Mammary epithelial cell (primary cell): ENCODE measurements at regions of chr3 and their contacts with region 1.

Region 1: DNA sequence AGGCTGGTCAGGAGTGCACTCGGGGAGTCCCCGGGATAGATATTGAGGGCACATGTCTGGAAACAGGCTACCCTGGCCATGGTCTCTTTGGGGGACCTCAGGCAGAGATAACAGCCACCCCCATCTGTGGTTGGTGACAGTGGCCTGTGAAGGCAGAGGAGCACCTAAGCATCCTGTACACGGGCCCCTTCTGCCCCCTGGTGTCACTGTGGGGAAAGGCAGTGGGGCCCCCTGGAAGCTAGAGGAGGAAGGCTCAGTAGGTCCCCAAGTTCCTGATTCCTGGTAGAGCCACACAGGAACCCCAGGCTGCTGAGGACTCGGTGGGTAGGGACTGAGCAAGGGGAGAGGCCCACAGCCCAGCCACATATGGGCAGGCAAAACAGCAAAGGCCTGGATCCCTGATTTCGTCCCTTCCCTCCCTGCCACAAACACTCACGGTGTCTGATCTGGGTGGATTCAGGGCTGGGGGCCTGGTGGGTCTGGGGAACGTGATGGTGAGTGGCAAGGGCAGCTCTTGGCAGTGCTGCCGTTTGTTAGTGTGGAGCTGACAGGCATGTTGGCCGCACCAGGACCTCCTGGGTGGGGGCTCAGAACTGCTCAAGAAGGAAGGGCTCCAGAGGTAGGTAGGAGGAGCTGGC is 14.1 kb upstream of the CXCR6 start:
- DNase-seq: no peak
- H3K4me3 ChIP-seq: no peak overlapping the region
- H3K27ac ChIP-seq: no peak overlapping the region
- H3K4me1 ChIP-seq: peaks cover 1% of the 10 kb centered on the region
- H3K27me3 ChIP-seq: no peaks in the 10 kb centered on the region
- CTCF ChIP-seq: peak; percentile 76 to 87

Region 2: DNA sequence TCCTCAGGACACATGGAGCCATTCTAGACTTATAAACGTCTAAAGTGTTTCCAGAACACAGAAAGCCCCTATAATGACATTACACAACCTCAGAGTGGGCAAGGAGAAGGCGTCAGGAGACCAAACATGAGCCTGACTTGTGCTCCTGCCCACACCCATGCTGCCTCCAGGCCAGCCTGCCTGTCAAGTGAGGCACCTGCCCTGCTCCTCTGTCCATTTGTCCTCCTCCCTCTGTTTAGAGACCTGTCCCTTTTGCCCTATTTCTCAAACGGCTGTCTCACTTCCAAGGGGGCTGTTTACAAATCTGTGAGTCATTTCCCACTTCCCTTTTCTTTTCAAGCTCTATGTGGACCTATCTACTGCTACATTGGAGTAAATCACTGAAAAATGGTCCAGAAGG is 974.2 kb before region 1 on chr3:
- CTCF ChIA-PET with region 1: no interaction called
- dilution Hi-C with region 1: no loop called
- in situ Hi-C with region 1: no loop called
- intact Hi-C with region 1: no loop called
- DNase-seq: no peak
- H3K4me3 ChIP-seq: no peak overlapping the region
- H3K27ac ChIP-seq: no peak overlapping the region
- H3K4me1 ChIP-seq: peaks cover 9% of the 10 kb centered on the region
- H3K27me3 ChIP-seq: no peaks in the 10 kb centered on the region
- CTCF ChIP-seq: no peak

Region 3: GRCh38 chr3:45760878-45761711 is 168.1 kb before region 1 on chr3:
- CTCF ChIA-PET with region 1: no interaction called
- dilution Hi-C with region 1: no loop called
- in situ Hi-C with region 1: loop called (anchors 10 to 25 kb)
- intact Hi-C with region 1: loop called (anchors 1 kb)
- DNase-seq: peak; percentile 26
- H3K4me3 ChIP-seq: no peak overlapping the region
- H3K27ac ChIP-seq: no peak overlapping the region
- H3K4me1 ChIP-seq: no peaks in the 10 kb centered on the region
- H3K27me3 ChIP-seq: no peaks in the 10 kb centered on the region
- CTCF ChIP-seq: peak; percentile 81 to 90

Region 4: GRCh38 chr3:45864760-45865519 is 64.2 kb before region 1 on chr3:
- CTCF ChIA-PET with region 1: no interaction called
- dilution Hi-C with region 1: loop called (anchors 5 kb)
- in situ Hi-C with region 1: no loop called
- intact Hi-C with region 1: no loop called
- DNase-seq: no peak
- H3K4me3 ChIP-seq: no peak overlapping the region
- H3K27ac ChIP-seq: no peak overlapping the region
- H3K4me1 ChIP-seq: no peaks in the 10 kb centered on the region
- H3K27me3 ChIP-seq: no peaks in the 10 kb centered on the region
- CTCF ChIP-seq: no peak

Region 5: DNA sequence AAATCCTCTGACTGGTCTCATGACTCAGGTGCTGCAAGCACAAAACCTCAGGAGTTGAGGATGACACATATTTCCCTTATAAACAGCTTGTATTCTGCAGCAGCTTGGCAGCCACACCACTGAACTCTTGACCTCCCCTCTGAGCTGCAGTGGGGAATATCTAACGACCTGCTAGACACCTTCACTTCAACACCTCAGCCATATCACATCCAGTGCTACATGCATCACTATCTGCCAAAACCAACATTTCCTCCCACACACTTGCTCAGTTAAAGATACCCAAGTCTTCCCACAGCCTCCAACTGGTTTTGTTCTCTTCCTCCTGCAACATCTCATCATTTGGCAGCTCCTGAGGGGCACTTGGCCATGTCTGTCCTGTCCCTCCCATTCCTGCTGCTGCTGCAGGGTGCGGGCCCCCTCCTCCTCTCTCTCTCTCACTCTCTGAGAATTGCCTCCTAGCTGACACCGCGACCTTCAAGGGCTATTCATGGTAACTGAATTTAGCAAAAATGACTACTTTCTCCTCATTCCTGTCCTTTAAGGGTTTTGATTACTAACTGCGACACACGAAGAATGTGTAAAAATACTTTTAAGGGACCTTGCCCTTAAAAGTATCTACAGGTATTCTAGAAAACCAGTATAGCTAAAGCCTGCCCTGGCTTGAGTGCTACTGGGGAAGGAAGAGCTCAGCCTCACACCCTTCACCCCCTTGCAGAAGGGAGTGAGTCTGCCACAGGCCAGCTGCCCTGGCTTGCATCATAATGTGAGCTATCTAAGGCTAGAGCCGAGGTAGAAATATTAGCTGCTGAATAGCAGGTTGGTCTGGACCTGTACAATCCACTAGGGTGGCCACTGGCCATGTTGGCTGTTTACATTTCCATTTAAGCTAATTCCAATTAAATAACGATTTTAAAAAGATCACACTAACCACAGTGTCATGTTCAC is 47.8 kb before region 1 on chr3:
- CTCF ChIA-PET with region 1: no interaction called
- dilution Hi-C with region 1: no loop called
- in situ Hi-C with region 1: no loop called
- intact Hi-C with region 1: no loop called
- DNase-seq: peak; percentile 82
- H3K4me3 ChIP-seq: no peak overlapping the region
- H3K27ac ChIP-seq: no peak overlapping the region
- H3K4me1 ChIP-seq: peaks cover 13% of the 10 kb centered on the region
- H3K27me3 ChIP-seq: peaks cover 4% of the 10 kb centered on the region
- CTCF ChIP-seq: no peak

Region 6: DNA sequence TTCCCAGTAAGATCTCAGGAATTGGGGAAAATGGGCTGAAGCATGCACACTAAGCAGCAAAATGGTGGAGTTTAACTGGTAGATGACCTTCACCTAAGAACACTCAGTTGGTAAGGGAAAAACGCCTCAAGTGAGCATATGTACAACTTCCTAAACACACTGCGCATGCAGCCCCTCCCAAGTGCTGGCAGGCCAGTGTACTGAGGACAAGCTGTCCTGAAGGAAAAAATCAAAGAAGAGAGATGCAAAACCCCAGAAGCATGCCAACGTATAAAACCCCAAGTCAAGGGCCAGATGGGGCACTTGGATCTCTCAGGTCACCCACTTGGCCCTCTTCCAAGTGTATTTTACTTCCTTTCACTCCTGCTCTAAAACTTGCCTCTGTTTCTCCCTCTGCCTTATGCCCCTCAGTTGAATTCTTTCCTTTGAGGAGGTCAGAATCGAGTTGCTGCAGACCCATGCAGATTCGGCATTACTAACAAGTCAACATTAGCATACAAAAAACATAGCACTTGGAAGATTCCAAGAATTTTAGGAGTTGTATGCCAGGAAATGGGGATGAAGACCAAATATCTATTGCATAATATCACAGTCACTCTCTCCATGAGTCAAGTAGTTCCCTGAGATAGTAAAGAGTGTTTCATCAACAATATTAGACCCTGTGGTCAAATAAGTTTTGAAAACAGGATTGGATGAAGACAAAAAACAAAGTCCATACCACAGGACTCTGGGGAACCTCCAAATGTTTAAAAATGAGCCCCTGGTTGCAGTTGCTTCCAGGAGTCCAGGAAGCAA is 77.3 kb after region 1 on chr3:
- CTCF ChIA-PET with region 1: no interaction called
- dilution Hi-C with region 1: no loop called
- in situ Hi-C with region 1: no loop called
- intact Hi-C with region 1: no loop called
- DNase-seq: peak; percentile 42
- H3K4me3 ChIP-seq: no peak overlapping the region
- H3K27ac ChIP-seq: no peak overlapping the region
- H3K4me1 ChIP-seq: no peaks in the 10 kb centered on the region
- H3K27me3 ChIP-seq: no peaks in the 10 kb centered on the region
- CTCF ChIP-seq: no peak